ENCODE measurements at regions of chr20 and their contacts with region 1.

Region 1: DNA sequence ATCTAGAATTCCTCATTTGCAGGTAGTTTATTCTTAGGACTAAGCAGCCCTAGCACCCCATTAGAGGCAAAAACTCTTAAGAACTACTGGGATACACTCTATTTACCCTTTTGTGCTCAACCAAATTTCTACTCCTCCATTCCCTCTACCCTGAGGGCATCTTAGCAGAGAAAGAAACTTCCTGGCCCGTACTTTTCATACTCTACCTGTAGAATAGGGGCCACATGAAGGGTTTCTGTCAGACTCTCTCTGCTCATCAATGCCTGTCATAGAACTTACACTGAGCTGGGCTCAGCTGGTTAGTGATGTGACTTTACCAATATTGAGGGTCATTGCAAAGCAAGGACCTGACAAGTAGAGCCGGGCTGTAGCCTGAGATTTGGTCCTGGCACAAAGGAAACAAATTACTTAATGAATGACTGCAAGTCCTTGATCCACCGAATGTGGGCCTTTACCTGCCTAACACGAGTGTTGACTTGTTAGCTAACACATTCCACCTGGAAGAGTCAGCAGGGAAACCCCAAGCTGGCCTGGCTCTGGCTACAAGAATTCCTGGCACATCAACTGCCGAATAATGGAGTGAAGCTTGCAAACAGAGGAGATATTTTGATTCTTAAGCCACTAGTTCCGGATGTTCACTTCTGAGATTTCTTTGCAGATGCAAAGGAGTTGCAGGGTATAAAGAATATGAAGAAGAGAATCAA is 280.5 kb upstream of the JAG1 start:
- DNase-seq: peak; percentile 96
- H3K4me3 ChIP-seq: no peak overlapping the region
- H3K27ac ChIP-seq: peak overlapping the region; percentile 77
- H3K4me1 ChIP-seq: peaks cover 42% of the 10 kb centered on the region
- H3K27me3 ChIP-seq: no peaks in the 10 kb centered on the region
- CTCF ChIP-seq: no peak

Region 2: DNA sequence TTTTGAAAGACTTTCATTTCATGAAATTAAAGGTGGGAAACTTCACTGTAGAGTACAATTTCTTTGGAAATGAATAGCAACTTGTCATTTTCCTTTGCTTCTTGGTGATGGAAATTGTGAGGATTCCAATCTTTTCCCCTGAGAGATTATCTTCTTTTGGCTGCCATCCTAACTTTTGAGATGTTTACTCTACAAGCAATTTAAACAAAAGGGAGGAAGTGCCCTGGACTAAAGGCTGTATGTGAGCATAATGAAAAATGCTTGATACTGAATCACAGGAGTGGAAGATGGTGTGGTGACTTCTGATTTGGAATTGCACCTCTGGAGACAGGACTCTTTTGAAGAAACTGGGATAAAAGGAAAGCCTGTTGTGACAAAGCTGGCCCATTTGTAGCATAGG is 237.4 kb before region 1 on chr20:
- CTCF ChIA-PET with region 1: interaction called, 10 read pairs
- dilution Hi-C with region 1: no loop called
- in situ Hi-C with region 1: no loop called
- intact Hi-C with region 1: no loop called
- DNase-seq: no peak
- H3K4me3 ChIP-seq: no peak overlapping the region
- H3K27ac ChIP-seq: no peak overlapping the region
- H3K4me1 ChIP-seq: peaks cover 12% of the 10 kb centered on the region
- H3K27me3 ChIP-seq: no peaks in the 10 kb centered on the region
- CTCF ChIP-seq: no peak

Region 3: DNA sequence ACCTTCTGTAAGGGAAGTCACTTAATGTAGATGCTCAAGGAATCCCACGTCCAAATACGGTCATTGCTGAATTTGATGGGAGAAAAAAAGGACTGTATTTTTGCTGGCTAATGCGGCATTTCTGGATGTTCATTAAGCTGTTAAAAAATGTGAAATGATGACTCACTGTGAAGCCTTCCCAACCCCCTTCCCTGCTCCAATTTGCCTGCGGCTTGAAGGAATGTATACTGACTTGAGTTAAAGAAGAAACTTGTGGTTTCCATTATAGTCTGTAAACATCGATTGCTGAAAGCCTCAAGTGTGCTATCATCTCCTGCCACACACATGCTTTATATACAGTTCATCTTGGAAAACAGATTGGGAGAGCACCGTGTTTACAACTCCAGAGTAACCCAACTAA is 31.3 kb before region 1 on chr20:
- CTCF ChIA-PET with region 1: interaction called, 5 read pairs
- dilution Hi-C with region 1: no loop called
- in situ Hi-C with region 1: no loop called
- intact Hi-C with region 1: loop called (anchors 1 kb)
- DNase-seq: peak; percentile 80
- H3K4me3 ChIP-seq: no peak overlapping the region
- H3K27ac ChIP-seq: peak overlapping the region; percentile 64
- H3K4me1 ChIP-seq: peaks cover 56% of the 10 kb centered on the region
- H3K27me3 ChIP-seq: no peaks in the 10 kb centered on the region
- CTCF ChIP-seq: no peak

Region 4: GRCh38 chr20:10985536-10985935 is 31.2 kb after region 1 on chr20:
- CTCF ChIA-PET with region 1: no interaction called
- dilution Hi-C with region 1: loop called (anchors 5 kb)
- in situ Hi-C with region 1: no loop called
- intact Hi-C with region 1: no loop called
- DNase-seq: peak; percentile 79
- H3K4me3 ChIP-seq: no peak overlapping the region
- H3K27ac ChIP-seq: no peak overlapping the region
- H3K4me1 ChIP-seq: peaks cover 19% of the 10 kb centered on the region
- H3K27me3 ChIP-seq: no peaks in the 10 kb centered on the region
- CTCF ChIP-seq: no peak

Region 5: DNA sequence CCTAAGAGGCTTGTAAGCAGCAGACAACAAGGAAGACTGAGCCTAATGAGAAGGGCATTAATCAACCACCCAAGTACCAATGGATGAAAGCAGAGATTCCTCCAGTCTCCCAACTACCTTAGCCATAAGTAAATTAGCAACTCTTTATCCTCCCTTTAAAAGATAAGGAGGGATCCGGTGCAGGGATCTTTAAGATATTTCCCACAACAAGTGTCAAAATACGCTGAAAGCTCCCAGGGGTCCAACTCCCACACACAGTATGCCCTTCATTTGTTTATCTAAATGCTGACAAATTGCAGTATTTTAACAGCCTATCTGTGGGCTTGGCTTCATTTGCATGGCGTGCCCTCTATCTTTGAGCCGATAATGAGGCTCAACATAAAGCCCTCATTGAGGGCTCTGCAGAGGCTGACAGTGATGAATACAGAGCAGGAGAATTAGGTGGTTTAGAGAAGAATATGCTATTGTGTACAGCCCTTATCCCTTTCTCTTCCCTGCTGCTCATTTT is 294.5 kb after region 1 on chr20:
- CTCF ChIA-PET with region 1: no interaction called
- dilution Hi-C with region 1: no loop called
- in situ Hi-C with region 1: no loop called
- intact Hi-C with region 1: no loop called
- DNase-seq: no peak
- H3K4me3 ChIP-seq: no peak overlapping the region
- H3K27ac ChIP-seq: no peak overlapping the region
- H3K4me1 ChIP-seq: no peaks in the 10 kb centered on the region
- H3K27me3 ChIP-seq: no peaks in the 10 kb centered on the region
- CTCF ChIP-seq: no peak